Transverse colon (tissue), 4 donors: ENCODE measurements at regions of chr6 and their contacts with region 1.

Region 1: GRCh38 chr6:167493976-167494697 is 169.3 kb downstream of the TTLL2 start:
- DNase-seq: peak; percentile 19
- H3K4me3 ChIP-seq: no peak overlapping the region
- H3K27ac ChIP-seq: no peak overlapping the region
- H3K4me1 ChIP-seq: peaks cover 0 to 8% (median 3%) of the 10 kb centered on the region in 4 donors
- H3K27me3 ChIP-seq: no peaks in the 10 kb centered on the region
- CTCF ChIP-seq: no peak
- EP300 ChIP-seq: no peak
- POLR2A ChIP-seq: no peak

Region 2: GRCh38 chr6:167424060-167424673 is 70.0 kb before region 1 on chr6:
- in situ Hi-C with region 1: no loop called
- intact Hi-C with region 1: no loop called
- DNase-seq: no peak
- H3K4me3 ChIP-seq: peak overlapping the region in 1 of 4 donors; percentile 9
- H3K27ac ChIP-seq: peak overlapping the region in 2 of 4 donors; percentile 37 to 71
- H3K4me1 ChIP-seq: peaks cover 0 to 11% (median 0%) of the 10 kb centered on the region in 4 donors
- H3K27me3 ChIP-seq: no peaks in the 10 kb centered on the region
- CTCF ChIP-seq: no peak
- EP300 ChIP-seq: no peak
- POLR2A ChIP-seq: no peak

Region 3: GRCh38 chr6:167898673-167899311 is 404.7 kb after region 1 on chr6:
- in situ Hi-C with region 1: loop called in 1 of 4 experiments (anchors 10 kb)
- intact Hi-C with region 1: no loop called
- DNase-seq: no peak
- H3K4me3 ChIP-seq: no peak overlapping the region
- H3K27ac ChIP-seq: no peak overlapping the region
- H3K4me1 ChIP-seq: no peaks in the 10 kb centered on the region
- H3K27me3 ChIP-seq: no peaks in the 10 kb centered on the region
- CTCF ChIP-seq: peak; percentile 67 to 81 (median 69)
- EP300 ChIP-seq: no peak
- POLR2A ChIP-seq: no peak